Psoas muscle (tissue), 8 donors: ENCODE measurements at regions of chr6 and their contacts with region 1.

Region 1: DNA sequence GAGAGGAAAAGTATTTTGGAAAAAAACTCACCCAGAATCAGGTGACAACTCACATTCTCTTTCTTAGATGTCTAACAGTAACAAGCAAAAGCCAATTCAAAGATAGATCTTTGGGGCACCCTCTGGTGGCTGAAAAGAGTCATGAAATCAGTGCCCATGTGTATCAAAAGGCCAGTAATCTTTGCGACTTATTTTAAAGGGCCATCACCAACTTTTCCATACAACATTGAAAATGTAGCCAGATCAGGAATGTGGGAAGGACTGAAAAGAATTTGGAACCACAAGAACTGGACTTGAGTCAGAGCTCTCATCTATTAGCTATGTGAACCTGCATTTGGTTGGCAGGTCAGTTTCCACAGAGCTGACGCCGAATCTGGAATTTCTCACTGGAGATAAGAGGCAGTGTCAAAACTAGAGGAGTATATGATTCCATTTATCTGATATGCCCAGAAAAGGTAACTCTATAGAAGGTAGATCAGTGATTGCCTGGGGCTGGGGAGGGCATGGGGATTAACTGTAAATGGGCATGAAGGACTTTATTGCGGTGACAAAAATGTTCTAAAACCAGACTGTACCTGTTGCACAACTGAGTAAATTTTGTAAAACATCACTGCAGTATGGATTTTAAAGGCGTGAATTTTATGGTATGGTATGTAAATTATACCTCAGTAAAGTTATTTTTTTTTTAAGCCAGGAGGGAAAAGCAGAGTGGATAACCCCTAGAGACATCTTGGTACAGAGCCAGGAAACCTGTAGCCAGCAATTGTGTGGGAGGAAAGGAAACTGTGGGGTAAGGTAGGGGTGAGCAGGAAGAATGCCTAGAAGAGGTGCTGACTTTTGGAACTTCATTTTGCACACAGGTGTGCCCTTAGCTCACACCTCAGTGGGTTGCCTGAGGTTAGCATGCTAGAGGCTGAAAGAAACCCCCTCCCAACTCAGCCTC is 117.1 kb upstream of the ASF1A start:
- DNase-seq: peak; percentile 33 to 62
- ATAC-seq: peak; percentile 85 to 97 (median 87)
- H3K4me3 ChIP-seq: peak overlapping the region; percentile 51
- H3K27ac ChIP-seq: no peak overlapping the region
- H3K4me1 ChIP-seq: peaks cover 13% of the 10 kb centered on the region
- H3K27me3 ChIP-seq: no peaks in the 10 kb centered on the region
- CTCF ChIP-seq: peak; percentile 84

Region 2: GRCh38 chr6:118639054-118639964 is 137.6 kb before region 1 on chr6:
- intact Hi-C with region 1: loop called in 1 of 2 experiments (anchors 5 kb)
- DNase-seq: no peak
- ATAC-seq: no peak
- H3K4me3 ChIP-seq: no peak overlapping the region
- H3K27ac ChIP-seq: no peak overlapping the region
- H3K4me1 ChIP-seq: peaks cover 59% of the 10 kb centered on the region
- H3K27me3 ChIP-seq: no peaks in the 10 kb centered on the region
- CTCF ChIP-seq: no peak

Region 3: GRCh38 chr6:118651282-118652050 is 125.4 kb before region 1 on chr6 and contains the start of gene CEP85L:
- intact Hi-C with region 1: loop called in 1 of 2 experiments (anchors 10 kb)
- DNase-seq: peak; percentile 94 to 96
- ATAC-seq: peak; percentile 95 to 97 (median 96)
- H3K4me3 ChIP-seq: peak within 1 kb of the TSS; percentile 97
- H3K27ac ChIP-seq: peak within 1 kb of the TSS; percentile 99
- H3K4me1 ChIP-seq: peaks cover 16% of the 10 kb centered on the region
- H3K27me3 ChIP-seq: no peaks in the 10 kb centered on the region
- CTCF ChIP-seq: no peak
- total RNA-seq, gene CEP85L: 18.9 to 25.1 (median 21.9) TPM